Caco-2 (cell line): ENCODE measurements at regions of chr3 and their contacts with region 1.

Region 1: DNA sequence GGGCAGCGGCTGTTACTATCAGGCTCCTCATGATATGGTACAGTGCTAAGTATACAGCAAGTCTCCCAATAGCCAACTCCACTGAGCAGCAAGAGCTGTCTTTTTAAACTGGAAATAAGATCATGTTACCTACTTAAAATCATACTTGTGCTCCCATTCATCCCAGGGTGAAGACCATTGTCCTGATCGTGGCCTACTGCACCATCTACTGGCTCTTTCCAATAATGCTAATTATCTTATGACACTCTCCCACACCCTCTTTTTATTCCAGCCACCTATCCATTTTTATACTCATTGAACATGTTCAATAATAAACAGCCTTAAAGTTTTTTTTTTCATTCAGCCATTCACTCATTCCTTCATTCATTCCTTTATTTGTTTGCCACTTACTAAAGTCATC is 117.7 kb downstream of the GBE1 start:
- DNase-seq: peak; percentile 28 to 33
- H3K4me3 ChIP-seq: no peak overlapping the region
- H3K4me3 Mint-ChIP-seq: no peak overlapping the region
- H3K27ac Mint-ChIP-seq: no peak overlapping the region
- H3K4me1 ChIP-seq: no peaks in the 10 kb centered on the region
- H3K4me1 Mint-ChIP-seq: no peaks in the 10 kb centered on the region
- H3K27me3 ChIP-seq: no peaks in the 10 kb centered on the region
- H3K27me3 Mint-ChIP-seq: no peaks in the 10 kb centered on the region
- CTCF ChIP-seq: peak; percentile 37 to 39

Region 2: GRCh38 chr3:81352867-81353545 is 290.7 kb before region 1 on chr3:
- CTCF ChIA-PET with region 1: no interaction called
- POLR2A ChIA-PET with region 1: no interaction called
- intact Hi-C with region 1: loop called (anchors 2 kb)
- DNase-seq: peak; percentile 32 to 33
- H3K4me3 ChIP-seq: no peak overlapping the region
- H3K4me3 Mint-ChIP-seq: no peak overlapping the region
- H3K27ac Mint-ChIP-seq: no peak overlapping the region
- H3K4me1 ChIP-seq: no peaks in the 10 kb centered on the region
- H3K4me1 Mint-ChIP-seq: peaks cover 8% of the 10 kb centered on the region
- H3K27me3 ChIP-seq: no peaks in the 10 kb centered on the region
- H3K27me3 Mint-ChIP-seq: no peaks in the 10 kb centered on the region
- CTCF ChIP-seq: peak in 1 of 2 experiments; percentile 19

Region 3: GRCh38 chr3:81419228-81419627 is 224.5 kb before region 1 on chr3:
- CTCF ChIA-PET with region 1: no interaction called
- POLR2A ChIA-PET with region 1: no interaction called
- intact Hi-C with region 1: loop called (anchors 1 kb)
- DNase-seq: no peak
- H3K4me3 ChIP-seq: no peak overlapping the region
- H3K4me3 Mint-ChIP-seq: no peak overlapping the region
- H3K27ac Mint-ChIP-seq: no peak overlapping the region
- H3K4me1 ChIP-seq: no peaks in the 10 kb centered on the region
- H3K4me1 Mint-ChIP-seq: no peaks in the 10 kb centered on the region
- H3K27me3 ChIP-seq: no peaks in the 10 kb centered on the region
- H3K27me3 Mint-ChIP-seq: no peaks in the 10 kb centered on the region
- CTCF ChIP-seq: peak in 1 of 2 experiments; percentile 41

Region 4: DNA sequence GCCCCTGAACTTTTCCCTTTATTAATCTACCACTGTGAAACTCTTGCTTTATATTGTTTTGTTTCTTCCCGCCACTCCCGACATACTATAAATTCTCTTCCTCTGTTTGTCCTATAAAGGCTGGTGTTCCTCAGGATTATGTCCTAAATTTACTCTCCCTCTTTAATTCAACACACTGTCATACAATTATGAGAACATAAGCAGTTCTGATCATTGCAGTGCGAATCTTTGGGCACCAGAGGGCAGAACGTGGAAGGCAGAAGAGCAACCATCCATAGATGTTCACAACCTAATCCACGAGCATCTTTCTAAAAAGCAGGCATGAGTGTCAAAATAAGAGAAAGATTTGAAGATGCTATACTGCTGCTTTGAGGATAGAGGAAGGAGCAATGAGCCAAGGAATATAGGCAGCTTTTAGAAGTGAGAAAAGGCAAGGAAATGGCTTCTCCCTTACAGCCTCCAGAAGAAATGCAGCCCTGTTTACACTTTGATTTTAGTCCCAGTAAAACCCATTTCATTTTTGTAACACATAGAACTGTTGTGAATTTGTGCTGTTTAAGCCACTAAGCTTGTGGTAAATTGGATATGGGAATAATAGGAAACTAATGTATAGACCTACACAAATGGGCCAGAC is 61.6 kb before region 1 on chr3:
- CTCF ChIA-PET with region 1: interaction called, 4 read pairs
- POLR2A ChIA-PET with region 1: no interaction called
- intact Hi-C with region 1: loop called (anchors 1 kb)
- DNase-seq: peak; percentile 33 to 51
- H3K4me3 ChIP-seq: no peak overlapping the region
- H3K4me3 Mint-ChIP-seq: no peak overlapping the region
- H3K27ac Mint-ChIP-seq: no peak overlapping the region
- H3K4me1 ChIP-seq: no peaks in the 10 kb centered on the region
- H3K4me1 Mint-ChIP-seq: peaks cover 7% of the 10 kb centered on the region
- H3K27me3 ChIP-seq: no peaks in the 10 kb centered on the region
- H3K27me3 Mint-ChIP-seq: no peaks in the 10 kb centered on the region
- CTCF ChIP-seq: peak; percentile 54 to 79